ENCODE measurements at regions of chr15 and their contacts with region 1.

Region 1: GRCh38 chr15:101652098-101652782 is at the start of gene TM2D3:
- DNase-seq: peak; percentile 92
- H3K4me3 Mint-ChIP-seq: peak within 1 kb of the TSS; percentile 89
- H3K27ac Mint-ChIP-seq: peak within 1 kb of the TSS; percentile 90
- H3K4me1 Mint-ChIP-seq: peaks cover 33% of the 10 kb centered on the region
- H3K27me3 Mint-ChIP-seq: no peaks in the 10 kb centered on the region
- total RNA-seq, gene TM2D3: 40.4 and 42.6 TPM in 2 replicates

Region 2: DNA sequence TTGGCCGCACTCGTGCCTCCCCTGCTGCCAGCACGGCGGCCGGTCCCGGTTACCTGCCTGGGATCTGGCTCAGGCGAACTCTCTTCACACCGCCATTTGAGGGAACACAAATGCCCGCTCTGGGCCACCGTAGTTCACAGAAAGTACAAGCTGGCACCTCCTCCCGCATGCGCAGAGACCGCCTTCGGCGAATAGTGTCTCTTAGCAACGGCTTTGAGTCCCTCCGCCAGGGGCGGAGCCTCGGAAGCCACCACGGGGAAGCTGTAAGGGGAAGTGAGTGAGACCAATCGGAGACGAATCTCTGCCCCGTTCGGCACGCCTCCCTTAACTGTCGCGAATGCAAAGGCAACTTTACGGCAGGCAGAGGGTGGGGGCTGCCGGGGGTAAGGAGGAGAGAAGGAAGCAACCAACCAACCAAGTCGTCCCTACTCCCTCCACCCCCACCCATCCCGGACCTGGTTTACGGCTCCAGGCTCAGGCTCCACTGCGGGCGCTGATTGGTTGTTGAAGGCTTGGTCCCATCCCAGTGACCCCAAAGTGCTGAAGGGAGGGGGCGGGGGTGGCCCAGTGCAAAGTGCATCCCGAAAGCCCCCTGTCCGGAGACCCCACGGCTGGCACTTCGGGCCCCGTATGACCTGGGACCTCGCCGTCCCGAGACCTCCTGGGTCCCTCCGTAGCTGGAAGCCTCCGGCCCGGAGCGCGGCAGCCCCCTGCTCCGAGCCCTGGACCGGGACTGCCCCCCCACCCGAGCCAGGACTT is 1050.0 kb before region 1 on chr15 and contains the starts of genes ASB7 and LINS1:
- intact Hi-C with region 1: loop called (anchors 5 kb)
- DNase-seq: peak; percentile 100
- H3K4me3 Mint-ChIP-seq: no peak within 1 kb of the TSS
- H3K27ac Mint-ChIP-seq: no peak within 1 kb of the TSS
- H3K4me1 Mint-ChIP-seq: peaks cover 50% of the 10 kb centered on the region
- H3K27me3 Mint-ChIP-seq: no peaks in the 10 kb centered on the region
- total RNA-seq, gene ASB7: 18.0 and 19.9 TPM in 2 replicates
- total RNA-seq, gene LINS1: 39.2 and 46.8 TPM in 2 replicates

Region 3: DNA sequence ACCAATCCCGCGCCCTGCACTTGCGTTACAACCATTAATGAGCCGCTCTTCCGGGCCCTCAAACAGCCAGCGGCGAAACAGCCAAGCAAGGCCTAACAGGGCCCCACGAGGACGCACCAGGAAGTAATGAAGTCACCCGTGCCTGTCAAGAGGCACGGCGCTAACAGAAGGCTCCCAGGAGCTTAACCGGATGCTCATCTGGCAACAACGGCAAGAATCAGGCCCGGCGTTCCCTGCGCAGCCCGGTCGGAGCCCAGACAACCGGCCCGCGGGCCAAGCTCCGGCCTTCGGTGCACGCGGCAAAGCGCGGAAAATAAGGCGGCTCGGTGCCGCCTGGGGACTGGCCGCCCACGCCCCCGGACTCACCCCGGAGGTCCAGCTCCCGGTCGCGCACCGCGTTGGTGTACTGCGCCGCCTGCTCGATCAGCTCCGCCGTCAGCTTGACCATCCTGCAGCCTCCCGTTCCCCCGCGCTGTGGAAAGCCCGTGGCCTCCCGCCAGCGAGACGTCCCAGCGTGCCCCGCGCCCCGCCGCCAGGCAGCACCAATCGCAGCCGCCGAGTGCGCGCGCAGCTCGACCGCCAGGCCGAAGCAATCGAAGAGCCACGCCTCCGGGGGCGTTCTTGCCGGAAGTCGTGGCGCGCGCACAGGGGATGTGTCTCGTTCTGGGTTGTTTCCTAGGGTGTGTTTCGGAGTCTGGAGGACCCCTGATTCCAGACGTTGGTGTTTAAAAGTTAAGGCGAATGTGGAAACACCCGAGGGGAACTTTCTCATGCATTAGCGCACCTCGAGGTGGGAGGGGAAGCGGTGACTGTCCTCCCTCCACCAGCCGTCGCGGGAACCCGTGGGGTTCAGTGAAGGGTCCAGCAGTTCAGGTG is 357.3 kb before region 1 on chr15 and contains the start of gene SNRPA1:
- intact Hi-C with region 1: loop called (anchors 1 kb)
- DNase-seq: peak; percentile 96
- H3K4me3 Mint-ChIP-seq: peak within 1 kb of the TSS; percentile 98
- H3K27ac Mint-ChIP-seq: peak within 1 kb of the TSS; percentile 95
- H3K4me1 Mint-ChIP-seq: peaks cover 40% of the 10 kb centered on the region
- H3K27me3 Mint-ChIP-seq: no peaks in the 10 kb centered on the region
- total RNA-seq, gene SNRPA1: 189 and 197 TPM in 2 replicates

Region 4: GRCh38 chr15:101333401-101333800 is 318.8 kb before region 1 on chr15:
- intact Hi-C with region 1: loop called (anchors 1 kb)
- DNase-seq: no peak
- H3K4me3 Mint-ChIP-seq: no peak overlapping the region
- H3K27ac Mint-ChIP-seq: peak overlapping the region; percentile 33
- H3K4me1 Mint-ChIP-seq: peaks cover 6% of the 10 kb centered on the region
- H3K27me3 Mint-ChIP-seq: peaks cover 13% of the 10 kb centered on the region

Region 5: DNA sequence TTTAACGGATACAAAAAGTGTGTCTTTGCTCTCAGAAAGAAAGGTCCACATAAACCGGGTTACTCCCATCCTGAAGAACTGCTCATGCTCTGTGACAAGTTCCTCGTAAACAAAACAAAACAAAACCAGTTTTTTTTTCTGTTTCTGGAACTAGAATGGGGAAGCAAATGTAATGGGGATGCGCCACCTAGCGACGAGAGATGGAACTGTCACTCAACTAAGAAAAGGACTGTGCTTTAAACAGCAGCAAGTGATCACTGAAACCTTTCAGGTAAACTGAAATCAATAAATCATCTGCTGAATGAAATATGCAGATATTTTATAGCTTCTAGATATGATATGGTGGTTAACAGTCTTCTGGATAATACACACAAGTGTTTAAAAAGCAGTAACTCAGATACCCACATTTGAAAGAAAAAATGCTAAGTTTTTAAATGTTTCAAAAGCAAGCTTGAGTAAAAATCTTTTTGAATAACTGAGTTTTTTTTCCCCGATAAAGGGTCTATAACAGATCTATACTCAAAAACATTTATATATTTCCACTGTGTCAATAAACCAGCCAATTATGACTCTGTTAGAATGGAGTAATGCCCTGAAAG is 11.0 kb before region 1 on chr15:
- intact Hi-C with region 1: loop called (anchors 1 kb)
- DNase-seq: peak; percentile 65
- H3K4me3 Mint-ChIP-seq: no peak overlapping the region
- H3K27ac Mint-ChIP-seq: peak overlapping the region; percentile 63
- H3K4me1 Mint-ChIP-seq: peaks cover 16% of the 10 kb centered on the region
- H3K27me3 Mint-ChIP-seq: no peaks in the 10 kb centered on the region

Region 6: GRCh38 chr15:101689901-101690300 is 37.7 kb after region 1 on chr15:
- intact Hi-C with region 1: loop called (anchors 5 kb)
- DNase-seq: no peak
- H3K4me3 Mint-ChIP-seq: no peak overlapping the region
- H3K27ac Mint-ChIP-seq: no peak overlapping the region
- H3K4me1 Mint-ChIP-seq: peaks cover 30% of the 10 kb centered on the region
- H3K27me3 Mint-ChIP-seq: no peaks in the 10 kb centered on the region

Region 7: GRCh38 chr15:101723874-101724674 is 71.8 kb after region 1 on chr15 and contains the start of gene TARS3:
- intact Hi-C with region 1: loop called (anchors 1 kb)
- DNase-seq: peak; percentile 84
- H3K4me3 Mint-ChIP-seq: peak within 1 kb of the TSS; percentile 84
- H3K27ac Mint-ChIP-seq: peak within 1 kb of the TSS; percentile 93
- H3K4me1 Mint-ChIP-seq: peaks cover 15% of the 10 kb centered on the region
- H3K27me3 Mint-ChIP-seq: no peaks in the 10 kb centered on the region
- total RNA-seq, gene TARS3: 14.1 and 14.5 TPM in 2 replicates

Region 8: GRCh38 chr15:101781927-101782326 is 129.7 kb after region 1 on chr15:
- intact Hi-C with region 1: no loop called
- DNase-seq: no peak
- H3K4me3 Mint-ChIP-seq: no peak overlapping the region
- H3K27ac Mint-ChIP-seq: no peak overlapping the region
- H3K4me1 Mint-ChIP-seq: no peaks in the 10 kb centered on the region
- H3K27me3 Mint-ChIP-seq: peaks cover 12% of the 10 kb centered on the region